ENCODE measurements at regions of chr1 and their contacts with region 1.

Region 1: DNA sequence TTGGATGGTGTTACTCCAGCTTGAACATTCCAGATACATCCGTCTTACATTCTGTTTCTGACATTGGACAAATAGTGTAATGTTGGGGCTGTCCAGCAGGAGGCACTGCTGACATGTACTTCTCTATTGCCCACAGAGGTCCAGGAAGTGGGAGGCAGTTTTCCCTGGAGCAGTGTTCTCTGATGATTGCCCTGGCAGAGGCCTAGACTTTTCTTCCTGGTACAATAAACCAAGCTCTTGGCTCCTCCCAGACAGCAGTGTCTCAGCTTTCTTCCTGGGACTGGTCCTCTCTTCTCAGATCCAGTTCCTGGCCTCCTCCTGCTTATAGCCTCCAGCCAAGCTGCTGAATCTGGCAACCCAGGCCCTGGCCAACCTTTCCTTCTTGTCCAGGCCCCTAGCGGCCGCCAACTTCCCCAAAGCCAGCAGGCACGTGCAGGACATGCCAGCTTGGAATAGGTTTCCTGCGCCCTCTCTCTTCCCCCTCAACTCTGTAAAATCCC is 14.9 kb upstream of the IFNLR1 start:
- DNase-seq: peak; percentile 71
- ATAC-seq: no peak
- H3K4me3 Mint-ChIP-seq: no peak overlapping the region
- H3K27ac Mint-ChIP-seq: no peak overlapping the region
- H3K4me1 Mint-ChIP-seq: peaks cover 23% of the 10 kb centered on the region
- H3K27me3 Mint-ChIP-seq: peaks cover 5% of the 10 kb centered on the region

Region 2: DNA sequence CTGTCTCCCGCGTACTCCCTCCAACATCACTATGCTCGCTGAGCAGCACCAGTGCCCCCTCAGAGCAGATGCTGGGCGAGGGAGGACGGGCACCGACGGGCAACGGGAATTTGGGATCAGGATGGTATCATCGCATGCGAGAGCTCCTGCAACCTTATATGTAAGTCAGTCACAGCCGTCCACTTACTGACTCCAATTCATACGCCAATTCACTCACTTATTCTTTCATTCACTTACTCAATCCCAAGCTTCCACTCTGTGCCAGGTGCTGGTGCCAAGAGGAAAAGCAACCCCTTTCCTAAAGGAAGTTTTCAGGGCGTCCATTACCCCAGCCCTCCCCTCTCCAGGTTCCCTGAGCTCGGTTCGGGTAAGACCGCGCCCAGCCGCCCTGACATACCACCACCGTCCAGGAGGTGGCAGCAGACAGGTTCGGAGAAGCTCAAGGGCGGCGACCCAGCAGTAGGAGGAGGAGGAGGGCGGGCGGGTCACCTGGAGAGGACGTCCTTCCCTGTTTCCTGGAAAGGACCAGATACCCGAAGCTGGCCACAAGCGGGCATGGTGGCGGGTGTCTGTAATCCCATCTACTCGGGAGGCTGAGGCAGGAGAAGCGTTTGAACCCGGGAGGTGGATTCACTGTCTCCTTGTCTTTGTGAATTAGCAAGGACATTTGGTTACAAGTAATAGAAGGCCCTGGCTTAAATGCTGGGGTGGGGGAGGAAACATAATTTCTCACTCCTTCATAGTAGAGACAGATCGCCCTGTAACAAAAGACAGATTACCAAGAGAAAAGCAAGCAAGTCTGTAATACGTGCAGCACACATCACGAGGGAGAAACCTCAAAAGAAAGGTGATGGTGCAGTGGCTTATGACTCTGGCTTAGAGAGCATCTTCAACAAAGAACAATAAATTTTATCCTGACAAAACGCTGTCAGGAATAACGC is 51.5 kb before region 1 on chr1:
- CTCF ChIA-PET with region 1: interaction called, 130 read pairs
- DNase-seq: peak; percentile 93
- ATAC-seq: peak; percentile 97
- H3K4me3 Mint-ChIP-seq: peak overlapping the region; percentile 54
- H3K27ac Mint-ChIP-seq: no peak overlapping the region
- H3K4me1 Mint-ChIP-seq: peaks cover 20% of the 10 kb centered on the region
- H3K27me3 Mint-ChIP-seq: peaks cover 40% of the 10 kb centered on the region

Region 3: GRCh38 chr1:24186993-24187805 is 14.8 kb before region 1 on chr1 and contains the start of gene IFNLR1:
- CTCF ChIA-PET with region 1: interaction called, 98 read pairs
- DNase-seq: peak; percentile 85
- ATAC-seq: peak; percentile 81
- H3K4me3 Mint-ChIP-seq: peak within 1 kb of the TSS; percentile 72
- H3K27ac Mint-ChIP-seq: peak within 1 kb of the TSS; percentile 65
- H3K4me1 Mint-ChIP-seq: peaks cover 49% of the 10 kb centered on the region
- H3K27me3 Mint-ChIP-seq: no peaks in the 10 kb centered on the region
- total RNA-seq, gene IFNLR1: 6.8 to 6.9 TPM

Region 4: GRCh38 chr1:24321697-24322469 is 119.9 kb after region 1 on chr1:
- CTCF ChIA-PET with region 1: interaction called, 20 read pairs
- DNase-seq: peak; percentile 84
- ATAC-seq: peak; percentile 69
- H3K4me3 Mint-ChIP-seq: peak overlapping the region; percentile 53
- H3K27ac Mint-ChIP-seq: peak overlapping the region; percentile 72
- H3K4me1 Mint-ChIP-seq: peaks cover 44% of the 10 kb centered on the region
- H3K27me3 Mint-ChIP-seq: peaks cover 94% of the 10 kb centered on the region

Region 5: DNA sequence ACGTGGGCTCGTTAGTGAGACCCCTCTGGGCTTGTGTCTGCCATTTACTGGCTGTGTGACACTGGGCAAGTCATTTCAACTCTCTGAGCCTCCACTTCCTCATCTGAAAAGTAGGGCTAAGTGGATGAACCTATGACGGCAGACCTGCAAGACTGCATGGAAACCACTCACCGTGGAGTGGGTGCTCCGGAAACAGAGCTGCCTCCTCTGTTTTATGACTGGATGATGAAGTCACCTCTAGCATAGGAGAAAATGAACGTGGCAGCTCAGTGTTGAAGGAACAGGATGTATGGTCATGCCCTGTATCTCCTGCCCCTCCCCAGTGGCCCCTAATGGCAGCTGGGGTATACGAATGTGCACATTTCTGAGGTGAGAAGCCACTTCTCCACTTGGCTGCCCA is 171.1 kb after region 1 on chr1:
- CTCF ChIA-PET with region 1: interaction called, 14 read pairs
- DNase-seq: no peak
- ATAC-seq: peak; percentile 53
- H3K4me3 Mint-ChIP-seq: no peak overlapping the region
- H3K27ac Mint-ChIP-seq: no peak overlapping the region
- H3K4me1 Mint-ChIP-seq: peaks cover 3% of the 10 kb centered on the region
- H3K27me3 Mint-ChIP-seq: no peaks in the 10 kb centered on the region

Region 6: GRCh38 chr1:24403806-24404205 is 201.8 kb after region 1 on chr1:
- CTCF ChIA-PET with region 1: interaction called, 11 read pairs
- DNase-seq: no peak
- ATAC-seq: no peak
- H3K4me3 Mint-ChIP-seq: no peak overlapping the region
- H3K27ac Mint-ChIP-seq: no peak overlapping the region
- H3K4me1 Mint-ChIP-seq: no peaks in the 10 kb centered on the region
- H3K27me3 Mint-ChIP-seq: no peaks in the 10 kb centered on the region

Region 7: GRCh38 chr1:24526940-24527542 is 325.1 kb after region 1 on chr1:
- CTCF ChIA-PET with region 1: interaction called, 10 read pairs
- DNase-seq: peak; percentile 65
- ATAC-seq: peak; percentile 47
- H3K4me3 Mint-ChIP-seq: no peak overlapping the region
- H3K27ac Mint-ChIP-seq: no peak overlapping the region
- H3K4me1 Mint-ChIP-seq: peaks cover 6% of the 10 kb centered on the region
- H3K27me3 Mint-ChIP-seq: no peaks in the 10 kb centered on the region